ENCODE measurements at regions of chr15 and their contacts with region 1.

Region 1: DNA sequence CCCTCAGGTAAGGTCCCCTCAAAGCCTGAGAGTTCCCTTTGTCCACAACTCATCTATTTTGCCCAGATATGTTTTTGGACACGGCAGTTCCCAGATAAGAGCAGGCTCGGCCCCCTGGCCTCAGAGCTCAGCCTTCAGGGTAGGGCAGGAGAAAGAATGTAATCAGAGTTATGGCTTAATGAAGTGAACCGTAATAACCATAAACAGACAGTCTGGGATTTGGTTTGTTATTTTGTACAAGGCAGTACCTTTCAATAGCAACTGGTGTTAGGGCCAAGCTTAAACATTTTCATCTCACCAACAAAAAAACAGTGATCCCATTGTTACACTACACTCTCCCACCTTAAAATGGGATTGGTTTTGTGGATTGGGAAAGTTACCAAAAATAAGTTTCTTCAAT is 12.2 kb upstream of the ALDH1A3 start:
- DNase-seq: no peak
- ATAC-seq: no peak
- H3K4me3 ChIP-seq: no peak overlapping the region
- H3K27ac ChIP-seq: no peak overlapping the region
- H3K4me1 ChIP-seq: peaks cover under 1% of the 10 kb centered on the region; the same call in 1 of the 2 replicates
- H3K27me3 ChIP-seq: no peaks in the 10 kb centered on the region
- CTCF ChIP-seq: no peak

Region 2: GRCh38 chr15:99250494-99251435 is 1616.7 kb before region 1 on chr15:
- CTCF ChIA-PET with region 1: interaction called, 10 read pairs
- POLR2A ChIA-PET with region 1: no interaction called
- intact Hi-C with region 1: no loop called
- DNase-seq: peak; percentile 99
- ATAC-seq: peak; percentile 90
- H3K4me3 ChIP-seq: peak overlapping the region; percentile 78
- H3K27ac ChIP-seq: peak overlapping the region; percentile 73
- H3K4me1 ChIP-seq: peaks cover 38% of the 10 kb centered on the region
- H3K27me3 ChIP-seq: no peaks in the 10 kb centered on the region
- CTCF ChIP-seq: no peak

Measured in PC-3 (cell line).